WTC11 (cell line): ENCODE measurements at regions of chr7 and their contacts with region 1.

Region 1: DNA sequence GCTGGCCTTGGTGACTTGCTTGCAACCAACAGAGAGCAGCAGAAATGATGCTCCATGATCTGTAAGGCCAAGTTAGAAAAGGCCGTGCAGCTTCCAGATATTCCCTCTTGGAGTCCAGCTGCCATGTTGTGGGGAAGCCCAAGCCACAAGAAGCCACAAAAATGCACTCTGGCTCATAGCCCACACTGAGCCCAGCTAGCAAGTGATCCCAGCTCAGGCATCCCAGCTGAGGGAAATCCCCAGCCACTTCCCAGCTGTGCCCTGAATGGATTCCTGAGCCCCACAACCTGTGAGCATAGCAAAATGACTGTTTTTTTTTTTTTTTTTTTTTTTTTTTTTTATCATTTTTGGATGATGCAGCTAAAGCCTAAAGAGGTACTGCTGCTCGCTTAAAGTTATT is 11.1 kb upstream of the SDK1 start:
- DNase-seq: no peak
- ATAC-seq: no peak
- H3K4me3 Mint-ChIP-seq: no peak overlapping the region
- H3K27ac Mint-ChIP-seq: no peak overlapping the region
- H3K4me1 Mint-ChIP-seq: peaks cover 13% of the 10 kb centered on the region
- H3K27me3 Mint-ChIP-seq: no peaks in the 10 kb centered on the region; the same call in 1 of the 2 replicates
- CTCF ChIP-seq: no peak

Region 2: GRCh38 chr7:3300651-3301378 is 10.8 kb after region 1 on chr7 and contains the start of gene SDK1:
- CTCF ChIA-PET with region 1: interaction called, 12 read pairs
- POLR2A ChIA-PET with region 1: no interaction called
- DNase-seq: peak; percentile 89
- ATAC-seq: peak; percentile 83
- H3K4me3 Mint-ChIP-seq: peak within 1 kb of the TSS; percentile 78
- H3K27ac Mint-ChIP-seq: no peak within 1 kb of the TSS
- H3K4me1 Mint-ChIP-seq: peaks cover 37% of the 10 kb centered on the region
- H3K27me3 Mint-ChIP-seq: peaks cover 24% of the 10 kb centered on the region
- CTCF ChIP-seq: peak; percentile 96
- total RNA-seq, gene SDK1: 9.3 to 10.5 TPM (median 10.0 TPM) in 3 replicates

Region 3: DNA sequence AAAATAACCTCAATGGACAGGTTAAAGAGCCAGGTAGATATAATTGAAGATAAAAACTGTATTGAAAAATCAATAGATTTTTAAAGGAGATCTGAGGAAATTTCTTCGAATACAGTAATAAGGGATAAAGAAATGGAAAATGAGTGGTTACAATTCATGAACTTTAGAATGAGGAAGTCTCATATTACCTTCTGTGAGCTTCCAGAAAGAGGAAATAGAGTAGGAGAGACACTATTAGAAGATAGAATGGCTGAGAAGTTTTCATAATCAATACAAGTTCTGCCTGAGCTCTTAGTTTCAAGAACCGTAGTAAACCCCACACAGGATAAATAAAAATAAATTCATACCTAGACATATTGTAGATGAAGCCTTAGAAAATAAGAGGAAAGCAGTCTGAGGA is 22.6 kb after region 1 on chr7:
- CTCF ChIA-PET with region 1: no interaction called
- POLR2A ChIA-PET with region 1: no interaction called
- DNase-seq: no peak
- ATAC-seq: no peak
- H3K4me3 Mint-ChIP-seq: no peak overlapping the region
- H3K27ac Mint-ChIP-seq: no peak overlapping the region
- H3K4me1 Mint-ChIP-seq: peaks cover 4% of the 10 kb centered on the region
- H3K27me3 Mint-ChIP-seq: no peaks in the 10 kb centered on the region
- CTCF ChIP-seq: no peak